ENCODE measurements at regions of chr6 and their contacts with region 1.

Region 1: DNA sequence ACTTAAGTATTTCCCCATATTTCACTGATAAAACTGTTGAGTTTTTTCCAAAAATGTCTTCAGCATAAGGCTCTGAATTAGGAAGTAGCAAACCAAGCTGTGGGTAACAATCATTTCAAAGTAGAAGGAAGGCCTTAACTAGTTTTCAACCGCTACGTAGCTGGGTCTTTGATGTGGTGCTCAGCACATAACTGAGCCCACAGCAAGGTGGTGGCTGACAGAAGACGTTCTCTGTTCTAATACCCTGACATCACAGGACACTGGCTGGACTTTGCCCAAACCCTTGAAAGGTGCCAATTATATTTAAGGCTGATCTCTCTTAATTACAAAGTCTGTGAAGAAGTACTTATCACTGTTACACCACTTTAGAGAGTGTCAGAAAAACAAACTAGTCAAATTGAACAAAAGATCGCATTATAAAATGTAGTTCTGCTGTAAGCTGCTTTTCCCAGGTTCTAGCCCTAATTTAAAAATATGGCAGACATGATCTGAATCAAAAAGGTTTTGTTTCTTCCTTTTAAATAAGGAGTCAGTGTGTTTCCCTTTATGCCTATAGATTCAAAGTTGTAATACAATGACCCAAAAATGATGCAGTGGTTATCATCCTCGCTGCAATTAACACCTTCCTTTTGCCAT is 26.7 kb downstream of the MAN1A1 start:
- DNase-seq: no peak
- ATAC-seq: peak; percentile 94
- H3K4me3 ChIP-seq: no peak overlapping the region
- H3K27ac ChIP-seq: no peak overlapping the region
- H3K4me1 ChIP-seq: no peaks in the 10 kb centered on the region
- H3K27me3 ChIP-seq: no peaks in the 10 kb centered on the region
- CTCF ChIP-seq: no peak
- EP300 ChIP-seq: no peak; a peak in 2 of 4 replicates
- POLR2A ChIP-seq: no peak
- RAD21 ChIP-seq: no peak

Region 2: DNA sequence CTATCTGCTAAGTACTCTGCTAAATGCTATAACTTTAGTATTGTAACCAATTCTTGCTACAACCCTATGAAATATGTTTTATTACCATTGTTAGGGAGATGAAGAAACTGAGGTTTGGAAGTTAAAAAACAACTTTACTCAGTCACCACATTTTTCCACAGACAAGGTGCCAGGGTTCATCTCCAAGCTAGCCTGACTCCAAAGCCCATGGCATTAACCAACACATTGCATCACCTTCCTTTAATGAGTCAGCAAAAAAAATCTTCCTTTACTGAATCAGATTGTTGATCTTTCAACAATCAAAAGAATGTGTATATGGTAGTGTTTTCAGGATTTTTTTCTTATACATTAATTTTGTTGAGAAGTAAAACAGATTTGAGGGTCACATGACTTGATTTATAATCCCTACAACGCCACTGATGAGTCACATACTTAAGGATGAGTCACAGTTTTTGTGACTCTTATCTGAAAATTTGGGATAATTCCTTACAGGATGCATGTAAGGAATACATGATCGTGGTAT is 14.7 kb before region 1 on chr6:
- CTCF ChIA-PET with region 1: interaction called, 32 read pairs
- POLR2A ChIA-PET with region 1: interaction called, 48 read pairs
- RAD21 ChIA-PET with region 1: interaction called, 51 read pairs
- SMC1A ChIA-PET with region 1: interaction called, 81 read pairs
- in situ Hi-C with region 1: no loop called
- intact Hi-C with region 1: no loop called
- DNase-seq: no peak
- ATAC-seq: no peak
- H3K4me3 ChIP-seq: no peak overlapping the region
- H3K27ac ChIP-seq: no peak overlapping the region
- H3K4me1 ChIP-seq: peaks cover 8% of the 10 kb centered on the region
- H3K27me3 ChIP-seq: no peaks in the 10 kb centered on the region
- CTCF ChIP-seq: no peak
- EP300 ChIP-seq: no peak
- POLR2A ChIP-seq: no peak
- RAD21 ChIP-seq: no peak

Region 3: GRCh38 chr6:119333707-119334295 is 11.0 kb after region 1 on chr6:
- CTCF ChIA-PET with region 1: interaction called, 35 read pairs
- POLR2A ChIA-PET with region 1: interaction called, 8 read pairs
- RAD21 ChIA-PET with region 1: interaction called, 33 read pairs
- SMC1A ChIA-PET with region 1: interaction called, 359 read pairs
- in situ Hi-C with region 1: no loop called
- intact Hi-C with region 1: no loop called
- DNase-seq: no peak
- ATAC-seq: peak; percentile 61
- H3K4me3 ChIP-seq: no peak overlapping the region
- H3K27ac ChIP-seq: no peak overlapping the region
- H3K4me1 ChIP-seq: no peaks in the 10 kb centered on the region
- H3K27me3 ChIP-seq: no peaks in the 10 kb centered on the region
- CTCF ChIP-seq: peak; percentile 45 to 69 (median 57); a peak in 5 of 6 replicates
- EP300 ChIP-seq: no peak
- POLR2A ChIP-seq: no peak
- RAD21 ChIP-seq: peak; percentile 88

Region 4: GRCh38 chr6:119340796-119341487 is 18.1 kb after region 1 on chr6:
- CTCF ChIA-PET with region 1: interaction called, 25 read pairs
- POLR2A ChIA-PET with region 1: interaction called, 11 read pairs
- RAD21 ChIA-PET with region 1: interaction called, 48 read pairs
- SMC1A ChIA-PET with region 1: interaction called, 359 read pairs
- in situ Hi-C with region 1: no loop called
- intact Hi-C with region 1: no loop called
- DNase-seq: no peak
- ATAC-seq: peak; percentile 8
- H3K4me3 ChIP-seq: 0 out of 2 replicates have a peak overlapping the region, but pooled peaks have one; percentile 14
- H3K27ac ChIP-seq: peak overlapping the region; percentile 10; the same call in 1 of the 2 replicates
- H3K4me1 ChIP-seq: peaks cover 10% of the 10 kb centered on the region
- H3K27me3 ChIP-seq: no peaks in the 10 kb centered on the region
- CTCF ChIP-seq: no peak
- EP300 ChIP-seq: no peak
- POLR2A ChIP-seq: no peak
- RAD21 ChIP-seq: no peak